IMR-90 (cell line): ENCODE measurements at regions of chr4 and their contacts with region 1.

Region 1: GRCh38 chr4:158259955-158260575 is 49.8 kb downstream of the TMEM144 start:
- DNase-seq: peak; percentile 42
- ATAC-seq: peak; percentile 83
- H3K4me3 ChIP-seq: no peak overlapping the region
- H3K27ac ChIP-seq: no peak overlapping the region
- H3K4me1 ChIP-seq: no peaks in the 10 kb centered on the region
- H3K27me3 ChIP-seq: no peaks in the 10 kb centered on the region
- CTCF ChIP-seq: peak; percentile 54
- POLR2A ChIP-seq: no peak
- RAD21 ChIP-seq: peak; percentile 70

Region 2: DNA sequence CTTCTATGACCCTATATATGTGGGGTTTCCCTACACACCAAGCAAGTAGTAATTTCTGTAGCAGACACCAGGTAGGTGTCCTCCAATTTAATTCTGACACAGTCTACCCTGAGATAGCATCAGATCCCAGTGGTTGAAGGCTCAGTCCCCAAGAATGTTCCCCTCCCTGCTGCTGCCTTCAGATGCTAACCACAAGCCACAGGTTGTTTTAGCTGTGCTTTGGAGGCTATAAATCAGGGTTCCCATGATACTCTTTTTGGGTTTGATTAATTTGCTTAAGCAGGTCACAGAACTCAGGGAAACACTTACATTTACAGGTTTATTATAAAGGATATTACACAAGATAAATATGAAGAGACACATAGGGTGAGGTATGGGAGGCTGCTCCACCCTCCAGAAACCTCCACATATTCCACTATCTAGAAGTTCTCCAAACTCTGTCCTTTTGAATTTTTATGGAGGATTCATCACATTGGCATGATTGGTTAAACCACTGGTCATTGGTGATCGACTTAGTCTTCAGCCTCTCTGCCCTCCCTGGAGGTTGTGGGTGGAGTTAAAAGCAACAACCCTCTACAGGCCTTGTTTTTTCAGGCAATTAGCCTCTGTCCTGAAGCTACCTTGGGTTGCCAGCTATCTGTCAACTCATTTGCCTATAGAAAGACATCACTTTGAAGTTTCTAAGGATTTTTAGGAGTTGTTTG is 988.7 kb before region 1 on chr4:
- CTCF ChIA-PET with region 1: no interaction called
- POLR2A ChIA-PET with region 1: no interaction called
- dilution Hi-C with region 1: no loop called
- in situ Hi-C with region 1: no loop called
- intact Hi-C with region 1: no loop called
- DNase-seq: no peak
- ATAC-seq: no peak
- H3K4me3 ChIP-seq: no peak overlapping the region
- H3K27ac ChIP-seq: no peak overlapping the region
- H3K4me1 ChIP-seq: no peaks in the 10 kb centered on the region
- H3K27me3 ChIP-seq: no peaks in the 10 kb centered on the region
- CTCF ChIP-seq: no peak
- POLR2A ChIP-seq: no peak
- RAD21 ChIP-seq: no peak

Region 3: GRCh38 chr4:158090323-158090722 is 169.7 kb before region 1 on chr4:
- CTCF ChIA-PET with region 1: no interaction called
- POLR2A ChIA-PET with region 1: no interaction called
- dilution Hi-C with region 1: no loop called
- in situ Hi-C with region 1: no loop called
- intact Hi-C with region 1: no loop called
- DNase-seq: peak; percentile 11
- ATAC-seq: peak; percentile 51
- H3K4me3 ChIP-seq: 0 out of 2 replicates have a peak overlapping the region, but pooled peaks have one; percentile 16
- H3K27ac ChIP-seq: no peak overlapping the region
- H3K4me1 ChIP-seq: peaks cover 2% of the 10 kb centered on the region; the same call in 1 of the 2 replicates
- H3K27me3 ChIP-seq: no peaks in the 10 kb centered on the region
- CTCF ChIP-seq: no peak
- POLR2A ChIP-seq: no peak
- RAD21 ChIP-seq: no peak

Region 4: GRCh38 chr4:158410272-158410671 is 150.2 kb after region 1 on chr4:
- CTCF ChIA-PET with region 1: interaction called, 4 read pairs
- POLR2A ChIA-PET with region 1: no interaction called
- dilution Hi-C with region 1: no loop called
- in situ Hi-C with region 1: no loop called
- intact Hi-C with region 1: loop called (anchors 5 kb)
- DNase-seq: peak; percentile 22
- ATAC-seq: peak; percentile 32
- H3K4me3 ChIP-seq: no peak overlapping the region
- H3K27ac ChIP-seq: no peak overlapping the region
- H3K4me1 ChIP-seq: no peaks in the 10 kb centered on the region
- H3K27me3 ChIP-seq: no peaks in the 10 kb centered on the region
- CTCF ChIP-seq: 0 out of 2 replicates have a peak, but pooled peaks have one; percentile 22
- POLR2A ChIP-seq: no peak
- RAD21 ChIP-seq: no peak

Region 5: GRCh38 chr4:158578476-158578875 is 318.4 kb after region 1 on chr4:
- CTCF ChIA-PET with region 1: interaction called, 4 read pairs
- POLR2A ChIA-PET with region 1: no interaction called
- dilution Hi-C with region 1: no loop called
- in situ Hi-C with region 1: no loop called
- intact Hi-C with region 1: loop called (anchors 1 kb)
- DNase-seq: peak; percentile 51
- ATAC-seq: peak; percentile 93
- H3K4me3 ChIP-seq: no peak overlapping the region
- H3K27ac ChIP-seq: no peak overlapping the region
- H3K4me1 ChIP-seq: no peaks in the 10 kb centered on the region
- H3K27me3 ChIP-seq: no peaks in the 10 kb centered on the region
- CTCF ChIP-seq: peak; percentile 44
- POLR2A ChIP-seq: no peak
- RAD21 ChIP-seq: peak; percentile 56

Region 6: GRCh38 chr4:159126716-159127115 is 866.7 kb after region 1 on chr4:
- CTCF ChIA-PET with region 1: no interaction called
- POLR2A ChIA-PET with region 1: no interaction called
- dilution Hi-C with region 1: no loop called
- in situ Hi-C with region 1: no loop called
- intact Hi-C with region 1: no loop called
- DNase-seq: no peak
- ATAC-seq: no peak
- H3K4me3 ChIP-seq: no peak overlapping the region
- H3K27ac ChIP-seq: no peak overlapping the region
- H3K4me1 ChIP-seq: peaks cover 2% of the 10 kb centered on the region; the same call in 1 of the 2 replicates
- H3K27me3 ChIP-seq: no peaks in the 10 kb centered on the region
- CTCF ChIP-seq: no peak
- POLR2A ChIP-seq: no peak
- RAD21 ChIP-seq: no peak

Region 7: DNA sequence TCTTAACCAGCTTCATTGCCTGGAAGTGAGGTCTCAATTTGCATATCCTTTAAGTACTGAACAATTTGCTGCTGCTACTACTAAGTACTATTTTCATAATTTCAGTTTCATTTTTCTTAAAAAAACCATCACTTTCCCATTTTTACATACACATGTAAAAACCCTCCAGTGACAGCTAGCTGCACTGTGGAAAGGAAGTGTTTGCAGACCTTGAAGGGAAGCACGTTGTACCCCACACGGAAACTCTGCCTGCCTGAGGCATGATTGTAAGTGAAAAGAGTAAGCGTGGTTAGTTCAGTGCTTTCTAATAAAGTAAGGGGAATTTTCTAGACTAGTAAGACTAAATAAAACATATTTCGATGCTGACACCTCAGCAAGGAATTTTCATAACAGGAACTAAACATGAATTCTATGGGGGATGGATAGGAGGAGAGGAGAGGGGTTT is 946.4 kb after region 1 on chr4:
- CTCF ChIA-PET with region 1: no interaction called
- POLR2A ChIA-PET with region 1: no interaction called
- dilution Hi-C with region 1: no loop called
- in situ Hi-C with region 1: no loop called
- intact Hi-C with region 1: loop called (anchors 2 kb)
- DNase-seq: peak; percentile 76
- ATAC-seq: peak; percentile 81
- H3K4me3 ChIP-seq: no peak overlapping the region
- H3K27ac ChIP-seq: no peak overlapping the region
- H3K4me1 ChIP-seq: peaks cover 3% of the 10 kb centered on the region
- H3K27me3 ChIP-seq: no peaks in the 10 kb centered on the region
- CTCF ChIP-seq: no peak
- POLR2A ChIP-seq: no peak
- RAD21 ChIP-seq: no peak